Activated CD4-positive, alpha-beta T cell treated with anti-CD3 and anti-CD28 coated beads for 36 hours (primary cell): ENCODE measurements at regions of chr6 and their contacts with region 1.

Region 1: DNA sequence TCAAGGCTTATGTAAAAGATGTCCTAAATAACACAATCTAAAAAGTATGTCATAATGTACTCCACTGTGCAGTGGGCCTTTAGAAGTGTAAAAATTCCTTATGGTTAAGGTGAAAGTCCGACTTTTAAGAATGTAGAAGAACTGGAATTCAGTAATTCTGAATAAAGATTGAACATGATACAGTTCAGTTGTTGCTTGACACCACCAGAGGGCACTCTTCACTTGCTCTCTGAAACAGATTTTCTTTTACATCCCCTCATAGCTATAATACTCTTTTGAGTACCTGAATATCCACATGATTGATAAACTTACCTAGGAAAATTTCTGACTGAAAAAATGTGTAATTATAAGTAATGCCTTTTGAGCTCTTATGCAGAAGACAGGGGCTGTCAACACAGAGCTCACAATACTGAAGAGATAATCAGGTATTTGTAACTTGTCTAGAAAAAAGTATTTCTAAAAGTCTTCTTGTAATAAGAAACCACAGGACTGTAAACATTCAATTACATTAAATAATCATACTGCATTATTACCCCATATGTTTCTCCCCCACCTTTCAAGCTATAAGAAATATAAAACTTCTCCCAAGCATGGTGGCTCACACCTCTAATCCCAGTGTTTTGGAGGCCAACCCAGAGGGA is 92.1 kb downstream of the POPDC3 start:
- DNase-seq: peak; percentile 49
- ATAC-seq: peak; percentile 36
- H3K4me3 Mint-ChIP-seq: no peak overlapping the region
- H3K27ac Mint-ChIP-seq: no peak overlapping the region
- H3K4me1 Mint-ChIP-seq: no peaks in the 10 kb centered on the region
- H3K27me3 Mint-ChIP-seq: no peaks in the 10 kb centered on the region

Region 2: GRCh38 chr6:105363100-105363754 is 275.5 kb after region 1 on chr6:
- CTCF ChIA-PET with region 1: interaction called, 4 read pairs
- POLR2A ChIA-PET with region 1: interaction called, 3 read pairs
- intact Hi-C with region 1: loop called in 1 of 2 experiments (anchors 2 kb)
- DNase-seq: no peak
- ATAC-seq: no peak
- H3K4me3 Mint-ChIP-seq: no peak overlapping the region
- H3K27ac Mint-ChIP-seq: no peak overlapping the region
- H3K4me1 Mint-ChIP-seq: peaks cover 15% of the 10 kb centered on the region
- H3K27me3 Mint-ChIP-seq: no peaks in the 10 kb centered on the region

Region 3: GRCh38 chr6:105424175-105424783 is 336.6 kb after region 1 on chr6:
- CTCF ChIA-PET with region 1: interaction called, 20 read pairs
- POLR2A ChIA-PET with region 1: no interaction called
- intact Hi-C with region 1: loop called (anchors 1 kb)
- DNase-seq: peak; percentile 75
- ATAC-seq: peak; percentile 80
- H3K4me3 Mint-ChIP-seq: no peak overlapping the region
- H3K27ac Mint-ChIP-seq: no peak overlapping the region
- H3K4me1 Mint-ChIP-seq: no peaks in the 10 kb centered on the region
- H3K27me3 Mint-ChIP-seq: no peaks in the 10 kb centered on the region